ENCODE measurements at regions of chr16 and their contacts with region 1.

Region 1: DNA sequence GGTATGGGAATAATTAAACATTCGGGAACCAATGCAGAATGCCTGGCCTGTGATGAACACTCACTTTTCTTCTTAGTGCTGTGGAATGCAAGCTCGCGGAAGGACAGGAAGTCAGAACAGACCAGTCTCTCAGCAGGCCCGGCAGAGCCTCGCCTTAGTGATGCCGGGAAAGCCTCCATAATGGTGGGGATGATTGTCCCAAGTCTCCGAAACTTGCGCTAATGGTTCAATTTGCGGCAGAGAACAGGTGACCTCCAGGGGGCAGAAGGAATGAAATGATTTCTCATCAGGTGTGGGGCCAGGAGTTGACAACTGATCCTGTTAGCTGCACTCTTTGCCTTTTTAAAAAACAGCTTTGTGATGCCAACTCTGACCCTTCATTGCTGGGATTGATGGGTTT is 170.6 kb downstream of the GSG1L start:
- DNase-seq: peak; percentile 27 to 52
- H3K4me3 ChIP-seq: no peak overlapping the region
- H3K27ac ChIP-seq: no peak overlapping the region
- H3K4me1 ChIP-seq: peaks cover 0 to 2% (median 0%) of the 10 kb centered on the region in 4 experiments; a peak in 2 of 7 replicates
- H3K27me3 ChIP-seq: no peaks in the 10 kb centered on the region; a peak in 1 of 7 replicates
- CTCF ChIP-seq: peak; percentile 39 to 65 (median 44)
- EP300 ChIP-seq: no peak
- POLR2A ChIP-seq: no peak
- RAD21 ChIP-seq: peak; percentile 32 to 48

Region 2: DNA sequence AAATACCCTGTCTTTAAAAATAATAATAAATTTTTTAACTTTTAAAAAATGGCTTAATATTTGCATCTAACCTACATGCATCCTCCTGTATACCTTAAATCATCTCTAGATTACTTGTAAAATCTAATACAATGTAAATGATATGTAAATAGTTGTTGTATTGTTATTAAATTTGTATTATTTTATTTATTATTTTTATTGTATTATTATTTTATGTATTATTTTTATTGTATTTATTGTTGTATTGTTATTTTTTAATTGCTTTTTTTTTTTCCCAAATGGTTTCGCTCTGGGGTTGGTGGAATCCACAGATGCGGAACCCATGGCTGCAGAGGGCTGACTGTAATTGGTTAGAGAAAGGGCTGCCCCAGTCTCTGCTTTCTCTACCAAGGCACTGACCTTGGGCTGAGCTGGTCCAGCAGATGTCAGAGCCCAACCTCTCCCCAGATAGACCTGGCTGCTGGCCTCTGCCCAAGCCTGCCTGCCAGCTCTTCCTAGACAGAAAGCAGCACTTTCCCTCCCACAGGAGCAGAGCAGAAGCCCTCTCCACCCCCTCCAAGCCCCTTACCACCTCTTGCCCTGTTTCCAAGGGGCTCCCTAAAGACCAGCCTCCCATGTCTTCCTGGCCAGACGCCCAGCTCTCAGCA is 13.2 kb before region 1 on chr16:
- CTCF ChIA-PET with region 1: interaction called, 17 read pairs
- POLR2A ChIA-PET with region 1: no interaction called
- DNase-seq: no peak
- H3K4me3 ChIP-seq: no peak overlapping the region
- H3K27ac ChIP-seq: no peak overlapping the region
- H3K4me1 ChIP-seq: no peaks in the 10 kb centered on the region
- H3K27me3 ChIP-seq: no peaks in the 10 kb centered on the region
- CTCF ChIP-seq: no peak
- EP300 ChIP-seq: no peak
- POLR2A ChIP-seq: no peak
- RAD21 ChIP-seq: no peak

Region 3: GRCh38 chr16:27906883-27907282 is 14.0 kb after region 1 on chr16:
- CTCF ChIA-PET with region 1: interaction called, 28 read pairs
- POLR2A ChIA-PET with region 1: no interaction called
- DNase-seq: no peak
- H3K4me3 ChIP-seq: no peak overlapping the region
- H3K27ac ChIP-seq: no peak overlapping the region
- H3K4me1 ChIP-seq: no peaks in the 10 kb centered on the region
- H3K27me3 ChIP-seq: no peaks in the 10 kb centered on the region
- CTCF ChIP-seq: no peak
- EP300 ChIP-seq: no peak
- POLR2A ChIP-seq: no peak
- RAD21 ChIP-seq: no peak

Region 4: DNA sequence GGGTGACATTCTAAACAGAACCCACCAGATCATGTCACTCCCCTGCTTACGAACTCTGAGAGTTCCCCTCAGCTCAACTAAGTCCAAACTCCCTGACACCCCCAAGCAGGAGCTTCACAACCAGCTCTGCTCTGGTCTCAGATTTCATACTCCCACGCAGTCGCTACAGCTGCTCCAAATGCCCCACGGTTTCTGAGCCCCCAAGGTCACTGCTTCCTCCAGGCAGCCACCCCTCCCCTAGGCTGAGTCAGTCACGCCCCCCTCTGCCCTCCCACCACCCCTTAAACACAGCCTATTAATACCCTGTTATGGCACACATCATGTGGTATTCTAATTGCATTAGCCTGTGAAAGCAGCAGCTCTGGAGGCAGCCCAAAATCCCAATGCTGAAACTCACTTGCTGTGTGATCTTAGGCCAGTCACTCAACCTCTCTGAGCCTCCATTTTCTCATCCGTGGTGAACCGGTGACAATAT is 119.1 kb after region 1 on chr16:
- CTCF ChIA-PET with region 1: no interaction called
- POLR2A ChIA-PET with region 1: no interaction called
- DNase-seq: no peak
- H3K4me3 ChIP-seq: no peak overlapping the region
- H3K27ac ChIP-seq: no peak overlapping the region
- H3K4me1 ChIP-seq: no peaks in the 10 kb centered on the region; a peak in 1 of 7 replicates
- H3K27me3 ChIP-seq: no peaks in the 10 kb centered on the region; a peak in 2 of 7 replicates
- CTCF ChIP-seq: no peak
- EP300 ChIP-seq: no peak
- POLR2A ChIP-seq: no peak
- RAD21 ChIP-seq: no peak

Measured in H1 (cell line).